HCT116 (cell line): ENCODE measurements at regions of chr1 and their contacts with region 1.

Region 1: GRCh38 chr1:37323486-37324377 is 150.6 kb upstream of the ZC3H12A start:
- DNase-seq: no peak
- ATAC-seq: peak; percentile 69
- H3K4me3 ChIP-seq: no peak overlapping the region
- H3K27ac ChIP-seq: no peak overlapping the region
- H3K4me1 ChIP-seq: no peaks in the 10 kb centered on the region
- H3K27me3 ChIP-seq: peaks cover 32% of the 10 kb centered on the region
- CTCF ChIP-seq: peak; percentile 65 to 89 (median 86)
- POLR2A ChIP-seq: no peak
- RAD21 ChIP-seq: peak; percentile 80

Region 2: DNA sequence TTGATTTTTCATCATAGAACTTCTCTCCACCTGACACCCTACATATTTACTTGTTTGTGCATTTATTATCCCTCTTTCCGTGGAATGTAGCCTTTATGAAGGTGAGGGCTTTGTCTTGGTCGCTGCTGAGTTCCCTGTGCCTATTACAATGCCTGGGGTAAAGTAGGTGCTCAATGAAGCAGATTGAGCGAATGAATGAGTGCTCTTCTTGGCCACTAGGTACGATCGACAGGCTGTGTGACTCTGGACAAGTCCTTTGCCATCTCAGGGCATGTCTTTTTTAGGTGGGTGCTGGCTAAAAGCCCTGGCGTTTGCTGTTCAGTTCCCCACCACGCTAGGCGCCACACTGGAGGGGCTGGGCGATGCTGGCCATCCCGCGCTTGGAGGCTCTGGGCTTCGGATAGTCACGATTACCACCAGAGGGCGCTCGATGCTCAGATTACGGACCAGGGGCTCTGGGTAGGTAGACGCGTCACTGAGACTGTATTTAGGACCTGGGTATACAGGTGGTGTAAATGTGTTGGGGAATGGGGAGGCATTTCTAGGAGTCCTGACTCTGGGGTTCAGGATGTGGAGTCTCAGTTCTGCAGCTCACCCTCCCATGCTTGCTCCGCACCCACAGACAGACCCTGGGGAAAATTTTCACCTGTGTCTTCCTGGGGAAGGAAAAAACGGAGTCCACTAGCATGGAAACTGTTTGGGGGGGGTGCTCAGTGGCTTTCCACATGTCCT is 770.0 kb before region 1 on chr1:
- CTCF ChIA-PET with region 1: no interaction called
- POLR2A ChIA-PET with region 1: no interaction called
- RAD21 ChIA-PET with region 1: no interaction called
- intact Hi-C with region 1: loop called (anchors 2 kb)
- DNase-seq: peak; percentile 60
- ATAC-seq: peak; percentile 100
- H3K4me3 ChIP-seq: no peak overlapping the region
- H3K27ac ChIP-seq: no peak overlapping the region
- H3K4me1 ChIP-seq: 0 out of 4 replicates have a peak, but pooled peaks cover 0 to 3% of the 10 kb centered on the region in 2 experiments
- H3K27me3 ChIP-seq: peaks cover 49% of the 10 kb centered on the region
- CTCF ChIP-seq: peak; percentile 80 to 91 (median 83)
- POLR2A ChIP-seq: no peak
- RAD21 ChIP-seq: peak; percentile 88

Region 3: GRCh38 chr1:36609241-36610027 is 714.3 kb before region 1 on chr1:
- CTCF ChIA-PET with region 1: interaction called, 3 read pairs
- POLR2A ChIA-PET with region 1: no interaction called
- RAD21 ChIA-PET with region 1: no interaction called
- intact Hi-C with region 1: loop called (anchors 10 kb)
- DNase-seq: peak; percentile 68
- ATAC-seq: peak; percentile 97
- H3K4me3 ChIP-seq: no peak overlapping the region
- H3K27ac ChIP-seq: no peak overlapping the region
- H3K4me1 ChIP-seq: no peaks in the 10 kb centered on the region
- H3K27me3 ChIP-seq: peaks cover 25% of the 10 kb centered on the region; the same call in 1 of the 2 replicates
- CTCF ChIP-seq: peak; percentile 70 to 99 (median 96)
- POLR2A ChIP-seq: no peak
- RAD21 ChIP-seq: peak; percentile 86

Region 4: GRCh38 chr1:36709869-36710481 is 613.8 kb before region 1 on chr1:
- CTCF ChIA-PET with region 1: no interaction called
- POLR2A ChIA-PET with region 1: no interaction called
- RAD21 ChIA-PET with region 1: no interaction called
- intact Hi-C with region 1: loop called (anchors 5 kb)
- DNase-seq: no peak
- ATAC-seq: no peak
- H3K4me3 ChIP-seq: no peak overlapping the region
- H3K27ac ChIP-seq: no peak overlapping the region
- H3K4me1 ChIP-seq: no peaks in the 10 kb centered on the region
- H3K27me3 ChIP-seq: peaks cover 91% of the 10 kb centered on the region
- CTCF ChIP-seq: no peak
- POLR2A ChIP-seq: no peak
- RAD21 ChIP-seq: no peak

Region 5: DNA sequence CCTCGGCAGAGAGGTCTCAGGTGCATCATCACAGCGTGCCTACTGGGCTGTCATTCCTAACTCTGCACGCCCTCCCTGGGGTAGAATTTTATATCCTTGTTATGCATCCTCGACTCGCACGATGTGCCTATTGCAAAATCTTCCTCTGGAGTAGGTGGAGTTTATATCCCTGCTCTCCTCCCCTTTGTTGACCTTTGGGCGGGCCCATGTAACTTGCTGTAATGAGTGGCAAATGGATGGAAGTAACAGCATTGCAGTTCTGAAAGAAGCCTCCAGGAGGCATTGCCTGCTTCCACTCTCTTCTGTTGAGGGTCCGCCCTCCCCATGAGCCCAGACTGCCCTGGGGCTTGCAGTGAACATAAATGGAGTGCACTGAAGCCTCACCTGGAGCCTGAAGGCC is 227.3 kb before region 1 on chr1:
- CTCF ChIA-PET with region 1: no interaction called
- POLR2A ChIA-PET with region 1: no interaction called
- RAD21 ChIA-PET with region 1: no interaction called
- intact Hi-C with region 1: loop called (anchors 5 kb)
- DNase-seq: peak; percentile 16
- ATAC-seq: peak; percentile 90
- H3K4me3 ChIP-seq: no peak overlapping the region
- H3K27ac ChIP-seq: no peak overlapping the region
- H3K4me1 ChIP-seq: peaks cover 0 to 4% of the 10 kb centered on the region in 2 experiments; a peak in 1 of 4 replicates
- H3K27me3 ChIP-seq: peaks cover 24% of the 10 kb centered on the region; the same call in 1 of the 2 replicates
- CTCF ChIP-seq: peak; percentile 14 to 53 (median 50); a peak in 5 of 6 replicates
- POLR2A ChIP-seq: no peak
- RAD21 ChIP-seq: peak; percentile 46

Region 6: DNA sequence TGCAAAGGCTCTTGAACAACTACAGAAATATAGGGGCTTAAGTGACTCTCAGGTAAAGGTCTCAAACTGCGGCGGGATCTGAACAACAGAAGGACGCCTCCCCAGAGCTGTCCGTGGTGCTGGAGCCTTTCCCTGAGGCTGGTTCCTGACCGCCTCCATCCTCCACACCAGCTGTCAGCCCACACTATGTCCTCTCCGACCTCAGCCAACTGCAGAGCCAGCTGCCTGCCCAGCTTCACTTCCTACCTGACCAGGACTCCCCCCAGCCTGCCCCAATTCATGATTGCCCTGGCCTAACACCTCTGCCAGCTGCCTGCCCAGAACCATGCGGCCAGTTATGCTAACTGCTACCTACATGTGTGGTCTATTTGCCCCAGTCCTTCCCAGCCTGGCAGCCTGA is 87.1 kb after region 1 on chr1:
- CTCF ChIA-PET with region 1: no interaction called
- POLR2A ChIA-PET with region 1: no interaction called
- RAD21 ChIA-PET with region 1: no interaction called
- intact Hi-C with region 1: no loop called
- DNase-seq: no peak
- ATAC-seq: peak; percentile 63; the same call in 1 of the 2 replicates
- H3K4me3 ChIP-seq: no peak overlapping the region
- H3K27ac ChIP-seq: no peak overlapping the region
- H3K4me1 ChIP-seq: no peaks in the 10 kb centered on the region
- H3K27me3 ChIP-seq: peaks cover 29% of the 10 kb centered on the region
- CTCF ChIP-seq: no peak
- POLR2A ChIP-seq: no peak
- RAD21 ChIP-seq: no peak